PC-3 (cell line): ENCODE measurements at regions of chr6 and their contacts with region 1.

Region 1: GRCh38 chr6:109382576-109383437 is 540 bp upstream of the CD164 start:
- DNase-seq: peak; percentile 83
- ATAC-seq: peak; percentile 68
- H3K4me3 ChIP-seq: peak overlapping the region; percentile 95
- H3K27ac ChIP-seq: peak overlapping the region; percentile 84
- H3K4me1 ChIP-seq: peaks cover 28% of the 10 kb centered on the region
- H3K27me3 ChIP-seq: no peaks in the 10 kb centered on the region
- CTCF ChIP-seq: peak; percentile 69

Region 2: GRCh38 chr6:109095027-109095834 is 287.6 kb before region 1 on chr6 and contains the start of gene CEP57L1:
- CTCF ChIA-PET with region 1: interaction called, 3 read pairs
- POLR2A ChIA-PET with region 1: interaction called, 5 read pairs
- intact Hi-C with region 1: loop called (anchors 2 kb)
- DNase-seq: peak; percentile 92
- ATAC-seq: peak; percentile 66
- H3K4me3 ChIP-seq: peak within 1 kb of the TSS; percentile 91
- H3K27ac ChIP-seq: peak within 1 kb of the TSS; percentile 88
- H3K4me1 ChIP-seq: peaks cover 13% of the 10 kb centered on the region; the same call in 1 of the 2 replicates
- H3K27me3 ChIP-seq: no peaks in the 10 kb centered on the region
- CTCF ChIP-seq: no peak
- total RNA-seq, gene CEP57L1: 19.8 and 26.4 TPM in 2 replicates

Region 3: GRCh38 chr6:109255946-109256640 is 126.7 kb before region 1 on chr6:
- CTCF ChIA-PET with region 1: no interaction called
- POLR2A ChIA-PET with region 1: no interaction called
- intact Hi-C with region 1: loop called (anchors 5 kb)
- DNase-seq: peak; percentile 31
- ATAC-seq: peak; percentile 74
- H3K4me3 ChIP-seq: no peak overlapping the region
- H3K27ac ChIP-seq: peak overlapping the region; percentile 46
- H3K4me1 ChIP-seq: peaks cover 43% of the 10 kb centered on the region
- H3K27me3 ChIP-seq: no peaks in the 10 kb centered on the region
- CTCF ChIP-seq: no peak

Region 4: GRCh38 chr6:109440331-109441068 is 57.7 kb after region 1 on chr6 and contains the starts of genes PPIL6 and SMPD2:
- CTCF ChIA-PET with region 1: no interaction called
- POLR2A ChIA-PET with region 1: no interaction called
- intact Hi-C with region 1: loop called (anchors 2 kb)
- DNase-seq: peak; percentile 81
- ATAC-seq: peak; percentile 81
- H3K4me3 ChIP-seq: peak within 1 kb of the TSS; percentile 84
- H3K27ac ChIP-seq: peak within 1 kb of the TSS; percentile 36
- H3K4me1 ChIP-seq: peaks cover 14% of the 10 kb centered on the region; the same call in 1 of the 2 replicates
- H3K27me3 ChIP-seq: no peaks in the 10 kb centered on the region
- CTCF ChIP-seq: no peak; the same call in 1 of the 2 replicates
- total RNA-seq, gene PPIL6: 0.62 and 2.1 TPM in 2 replicates
- total RNA-seq, gene SMPD2: 12.6 and 13.8 TPM in 2 replicates